A673 (cell line): ENCODE measurements at regions of chr12 and their contacts with region 1.

Region 1: DNA sequence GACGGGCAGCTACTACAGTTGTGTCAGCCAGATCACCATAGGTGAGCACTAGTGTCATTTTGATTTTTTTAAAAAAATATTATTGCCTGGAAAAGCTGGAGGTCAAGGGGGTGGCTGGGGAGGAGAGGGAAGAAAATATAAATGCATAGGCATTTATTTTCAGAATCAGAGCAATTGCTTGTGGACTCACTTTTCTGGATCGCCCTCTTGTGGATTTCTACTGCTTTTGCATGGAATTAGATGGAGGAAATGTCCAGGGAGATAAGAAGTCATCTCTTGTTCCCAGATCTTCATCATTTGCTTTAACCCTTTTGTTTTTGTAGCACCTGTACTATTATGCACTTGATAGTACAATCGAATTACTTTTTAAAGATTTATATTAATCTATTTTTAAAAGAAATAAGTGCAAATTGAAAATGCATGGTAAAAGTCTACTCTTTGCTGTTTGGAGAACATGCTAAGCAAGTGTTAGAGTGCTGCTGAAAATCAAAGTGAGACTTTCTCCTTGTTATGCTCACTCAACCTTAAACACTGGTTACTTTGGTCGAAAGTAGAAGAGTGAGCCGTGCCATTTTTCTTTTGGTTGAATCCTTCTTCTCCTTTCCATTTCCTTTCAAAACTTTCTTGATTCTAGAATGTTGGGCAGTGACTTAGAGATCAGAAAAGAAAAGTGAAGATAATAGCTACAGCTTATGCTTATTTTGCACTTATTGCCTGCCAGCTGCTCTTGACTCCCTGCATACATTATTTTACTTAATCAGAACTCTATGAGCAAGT is 60.6 kb upstream of the ANO4 start:
- DNase-seq: peak; percentile 59
- H3K4me3 ChIP-seq: no peak overlapping the region
- H3K27ac ChIP-seq: no peak overlapping the region
- H3K4me1 ChIP-seq: no peaks in the 10 kb centered on the region
- H3K27me3 ChIP-seq: peaks cover 6% of the 10 kb centered on the region
- CTCF ChIP-seq: peak; percentile 72

Region 2: GRCh38 chr12:100437038-100437841 is 296.8 kb before region 1 on chr12:
- CTCF ChIA-PET with region 1: no interaction called
- POLR2A ChIA-PET with region 1: no interaction called
- intact Hi-C with region 1: no loop called
- DNase-seq: no peak
- H3K4me3 ChIP-seq: no peak overlapping the region
- H3K27ac ChIP-seq: no peak overlapping the region
- H3K4me1 ChIP-seq: no peaks in the 10 kb centered on the region
- H3K27me3 ChIP-seq: no peaks in the 10 kb centered on the region
- CTCF ChIP-seq: no peak

Region 3: DNA sequence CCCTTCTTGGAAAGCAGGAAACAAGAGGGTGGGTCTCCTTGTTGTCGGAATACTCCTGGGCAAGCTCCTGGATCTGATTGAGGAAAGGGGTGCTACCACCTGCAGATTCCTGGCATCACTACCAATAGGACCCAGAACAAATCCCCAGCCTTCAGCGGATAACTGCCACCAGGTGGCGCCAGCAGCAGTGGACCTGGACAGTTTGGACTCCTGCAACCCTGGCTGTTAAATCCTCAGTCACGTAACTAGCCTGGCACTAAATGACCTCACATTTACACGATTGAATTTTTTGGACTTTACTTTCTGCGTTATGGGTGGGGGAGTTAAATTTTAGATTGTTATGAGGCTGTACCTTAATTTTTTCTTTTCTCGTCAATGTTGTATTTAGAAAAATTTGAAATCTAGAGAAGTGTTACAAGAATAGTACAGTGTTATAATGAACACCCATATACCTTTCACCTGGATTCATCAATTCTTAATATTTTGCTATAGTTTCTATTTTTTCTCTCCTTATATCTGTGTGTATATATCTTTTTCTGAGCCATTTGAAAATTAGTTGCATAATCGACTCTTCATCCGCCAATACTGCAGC is 65.0 kb before region 1 on chr12:
- CTCF ChIA-PET with region 1: no interaction called
- POLR2A ChIA-PET with region 1: no interaction called
- intact Hi-C with region 1: loop called (anchors 2 kb)
- DNase-seq: peak; percentile 75
- H3K4me3 ChIP-seq: no peak overlapping the region
- H3K27ac ChIP-seq: no peak overlapping the region
- H3K4me1 ChIP-seq: no peaks in the 10 kb centered on the region
- H3K27me3 ChIP-seq: no peaks in the 10 kb centered on the region
- CTCF ChIP-seq: peak; percentile 98